PC-9 (cell line): ENCODE measurements at regions of chr12 and their contacts with region 1.

Region 1: GRCh38 chr12:26749781-26750180 is 83.2 kb downstream of the ITPR2 start:
- DNase-seq: no peak
- H3K4me3 ChIP-seq: no peak overlapping the region
- H3K27ac ChIP-seq: no peak overlapping the region
- H3K4me1 ChIP-seq: 0 out of 2 replicates have a peak, but pooled peaks cover 8% of the 10 kb centered on the region
- H3K27me3 ChIP-seq: no peaks in the 10 kb centered on the region
- CTCF ChIP-seq: no peak

Region 2: GRCh38 chr12:26734510-26735248 is 15.1 kb before region 1 on chr12:
- CTCF ChIA-PET with region 1: interaction called, 10 read pairs
- POLR2A ChIA-PET with region 1: interaction called, 4 read pairs
- intact Hi-C with region 1: no loop called
- DNase-seq: no peak
- H3K4me3 ChIP-seq: no peak overlapping the region
- H3K27ac ChIP-seq: no peak overlapping the region
- H3K4me1 ChIP-seq: no peaks in the 10 kb centered on the region
- H3K27me3 ChIP-seq: no peaks in the 10 kb centered on the region
- CTCF ChIP-seq: no peak

Region 3: GRCh38 chr12:26768611-26769603 is 19.1 kb after region 1 on chr12:
- CTCF ChIA-PET with region 1: no interaction called
- POLR2A ChIA-PET with region 1: no interaction called
- intact Hi-C with region 1: loop called (anchors 2 kb)
- DNase-seq: peak; percentile 16 to 81
- H3K4me3 ChIP-seq: no peak overlapping the region
- H3K27ac ChIP-seq: no peak overlapping the region
- H3K4me1 ChIP-seq: peaks cover 15% of the 10 kb centered on the region
- H3K27me3 ChIP-seq: no peaks in the 10 kb centered on the region
- CTCF ChIP-seq: no peak

Region 4: GRCh38 chr12:26832822-26833742 is 83.3 kb after region 1 on chr12 and contains the start of gene ITPR2:
- CTCF ChIA-PET with region 1: no interaction called
- POLR2A ChIA-PET with region 1: no interaction called
- intact Hi-C with region 1: loop called (anchors 2 kb)
- DNase-seq: peak; percentile 80 to 99
- H3K4me3 ChIP-seq: peak within 1 kb of the TSS; percentile 83
- H3K27ac ChIP-seq: peak within 1 kb of the TSS; percentile 61
- H3K4me1 ChIP-seq: peaks cover 14% of the 10 kb centered on the region
- H3K27me3 ChIP-seq: no peaks in the 10 kb centered on the region
- CTCF ChIP-seq: peak; percentile 51; the same call in 1 of the 2 replicates
- total RNA-seq, gene ITPR2: 16.2 and 26.0 TPM in 2 replicates